Gastrocnemius medialis (tissue), 4 donors: ENCODE measurements at regions of chr6 and their contacts with region 1.

Region 1: DNA sequence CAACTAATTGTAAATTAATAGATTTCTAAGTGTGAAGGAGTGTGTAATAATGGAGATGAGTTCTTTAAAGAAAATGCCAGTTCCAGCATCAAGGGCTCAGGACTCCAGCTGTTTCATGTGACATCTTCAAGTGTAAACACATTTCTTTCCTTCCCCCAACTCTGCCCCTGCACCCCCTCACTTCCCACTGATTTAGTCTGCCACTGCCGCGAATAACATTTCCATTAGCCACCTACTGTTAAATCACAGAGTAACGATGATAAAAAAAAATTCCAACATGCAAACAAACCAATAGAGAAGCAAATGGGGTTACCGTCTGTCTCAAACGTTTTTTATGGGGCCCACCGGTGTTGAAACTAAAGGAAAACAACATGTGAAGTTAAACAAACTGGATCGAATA is 414.3 kb downstream of the SAMD5 start:
- DNase-seq: no peak
- ATAC-seq: no peak
- H3K4me3 ChIP-seq: no peak overlapping the region
- H3K27ac ChIP-seq: no peak overlapping the region
- H3K4me1 ChIP-seq: no peaks in the 10 kb centered on the region
- H3K27me3 ChIP-seq: no peaks in the 10 kb centered on the region
- CTCF ChIP-seq: no peak
- POLR2A ChIP-seq: no peak

Region 2: DNA sequence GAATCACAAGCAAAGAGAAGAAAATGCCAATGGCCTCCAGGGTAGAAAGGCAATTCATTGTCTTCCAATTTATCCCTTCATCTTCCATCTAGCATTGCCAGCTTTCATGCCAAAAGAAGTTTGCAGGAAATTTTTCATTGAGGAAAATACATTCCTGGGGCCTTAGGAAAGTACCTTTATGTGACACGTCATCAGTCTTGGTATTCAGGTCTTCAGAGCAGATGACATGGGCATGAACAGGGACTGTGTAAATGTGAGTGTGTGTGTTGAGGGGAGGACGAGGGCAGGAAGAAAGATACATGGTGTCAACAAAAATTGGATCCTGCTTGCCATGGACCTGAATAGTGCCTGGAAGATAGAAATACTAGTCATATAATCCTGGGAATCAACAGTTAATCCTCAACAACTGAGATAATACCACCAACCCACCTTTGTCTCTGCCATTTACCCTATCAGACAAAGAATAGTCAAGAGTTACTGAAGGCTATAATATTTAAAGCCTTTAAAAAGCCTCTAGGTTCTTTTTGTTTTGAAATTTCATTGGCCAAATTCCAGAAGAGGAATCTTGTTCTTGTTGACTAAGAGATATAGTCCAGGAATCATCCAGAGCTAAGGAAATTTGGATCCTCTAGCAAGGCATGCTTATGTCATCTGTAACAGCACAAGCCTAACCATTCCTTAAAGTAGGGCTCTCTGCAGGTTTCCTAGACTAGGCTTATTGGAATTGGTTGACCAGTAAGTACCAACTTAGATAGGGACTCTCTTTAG is 14.1 kb after region 1 on chr6:
- in situ Hi-C with region 1: no loop called
- intact Hi-C with region 1: no loop called
- DNase-seq: no peak
- ATAC-seq: no peak
- H3K4me3 ChIP-seq: no peak overlapping the region
- H3K27ac ChIP-seq: no peak overlapping the region
- H3K4me1 ChIP-seq: no peaks in the 10 kb centered on the region
- H3K27me3 ChIP-seq: no peaks in the 10 kb centered on the region
- CTCF ChIP-seq: no peak
- POLR2A ChIP-seq: no peak

Region 3: DNA sequence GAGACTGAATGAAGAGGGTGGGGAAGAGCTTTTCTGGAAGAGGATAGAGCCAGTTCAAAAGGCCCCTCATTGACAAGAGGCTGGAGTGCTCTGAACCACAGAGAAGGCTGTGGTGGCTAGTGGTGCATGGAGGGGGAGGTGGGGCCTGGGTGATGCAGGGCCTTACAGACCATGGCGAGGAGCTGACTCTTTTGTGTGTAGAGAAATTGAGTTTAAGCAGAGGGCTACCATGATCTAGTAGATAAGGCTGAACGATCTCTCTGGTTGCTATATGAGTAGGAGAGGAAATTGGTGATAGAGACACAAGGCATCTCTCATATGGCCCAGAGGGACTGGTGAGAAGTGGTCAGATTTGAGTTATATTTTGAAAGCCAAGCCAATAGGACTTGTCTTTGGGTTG is 961.7 kb after region 1 on chr6:
- in situ Hi-C with region 1: no loop called
- intact Hi-C with region 1: loop called (anchors 5 kb)
- DNase-seq: no peak
- ATAC-seq: no peak
- H3K4me3 ChIP-seq: no peak overlapping the region
- H3K27ac ChIP-seq: no peak overlapping the region
- H3K4me1 ChIP-seq: no peaks in the 10 kb centered on the region
- H3K27me3 ChIP-seq: no peaks in the 10 kb centered on the region
- CTCF ChIP-seq: no peak
- POLR2A ChIP-seq: no peak